ENCODE measurements at regions of chr18 and their contacts with region 1.

Region 1: DNA sequence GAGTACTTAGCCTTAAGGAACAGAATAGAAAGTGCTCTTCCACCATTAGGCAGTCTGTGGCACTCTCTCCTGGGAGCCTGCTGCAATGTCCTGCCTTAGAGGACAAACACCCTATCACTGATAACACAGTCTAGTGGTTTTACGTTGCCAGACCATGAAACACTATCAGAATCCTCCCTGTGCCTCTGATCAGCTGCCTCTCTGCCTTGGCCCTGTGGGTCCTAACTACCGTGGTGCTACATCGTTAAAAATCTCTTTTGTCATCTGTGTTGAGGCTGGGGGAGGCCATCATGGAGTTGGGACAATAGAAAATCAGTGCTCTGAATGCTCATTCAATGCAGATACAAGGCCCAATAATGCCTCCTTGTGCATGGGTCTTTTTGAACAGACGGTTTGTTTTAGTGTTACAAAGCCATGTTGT is 11.9 kb upstream of the APCDD1 start:
- DNase-seq: no peak
- ATAC-seq: peak; percentile 65 to 85 (median 82)
- H3K4me3 ChIP-seq: no peak overlapping the region
- H3K27ac ChIP-seq: no peak overlapping the region
- H3K4me1 ChIP-seq: no peaks in the 10 kb centered on the region
- H3K27me3 ChIP-seq: no peaks in the 10 kb centered on the region
- CTCF ChIP-seq: peak in 8 of 12 donors; percentile 15 to 36 (median 22)
- POLR2A ChIP-seq: no peak

Region 2: DNA sequence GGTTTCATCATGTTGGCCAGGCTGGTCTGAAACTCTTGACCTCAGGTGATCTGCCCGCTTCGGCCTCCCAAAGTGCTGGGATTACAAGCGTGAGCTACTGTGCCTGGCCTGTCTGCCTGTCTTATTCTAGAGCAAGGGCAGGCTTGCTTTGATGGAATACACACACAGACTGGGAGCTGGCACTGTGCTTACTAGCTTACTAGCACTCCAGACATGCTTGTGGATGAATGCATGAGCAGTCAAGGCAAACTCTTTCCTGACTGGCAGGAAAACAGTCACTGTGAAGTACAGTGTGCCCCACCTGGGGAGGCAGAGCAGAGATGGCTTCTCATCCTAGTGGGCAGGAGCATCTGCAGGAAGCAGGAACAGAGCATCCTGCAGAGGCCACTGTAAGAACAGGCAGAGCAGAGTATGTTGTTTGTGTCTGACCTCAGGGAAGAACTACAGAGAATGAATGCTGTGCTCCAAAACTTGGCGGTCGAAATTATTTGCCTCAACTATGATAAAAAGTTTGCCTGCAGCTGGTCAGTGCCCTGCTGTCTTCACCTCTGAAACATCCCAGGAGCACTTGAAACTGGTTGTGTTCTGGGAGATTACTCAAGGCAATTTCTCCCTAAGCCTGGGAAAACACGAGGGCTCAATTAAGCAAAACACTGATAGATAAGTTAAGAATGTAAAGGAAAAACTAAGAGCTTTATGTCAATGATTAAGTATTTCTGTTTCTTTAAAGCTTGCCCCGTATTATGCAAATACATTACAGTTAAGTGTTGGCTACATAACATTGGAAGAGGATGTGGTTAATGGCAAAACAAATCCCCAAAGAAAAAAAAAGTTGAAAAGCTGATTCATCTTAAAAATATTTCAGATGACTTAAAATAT is 426.4 kb before region 1 on chr18:
- intact Hi-C with region 1: loop called in 1 of 10 experiments (anchors 10 kb)
- DNase-seq: peak in 4 of 5 donors; percentile 34 to 60 (median 38)
- ATAC-seq: peak; percentile 76 to 89 (median 83)
- H3K4me3 ChIP-seq: no peak overlapping the region
- H3K27ac ChIP-seq: peak overlapping the region; percentile 49 to 86 (median 66)
- H3K4me1 ChIP-seq: peaks cover 0 to 50% (median 31%) of the 10 kb centered on the region in 12 donors
- H3K27me3 ChIP-seq: no peaks in the 10 kb centered on the region
- CTCF ChIP-seq: peak in 9 of 12 donors; percentile 24 to 64 (median 45)
- POLR2A ChIP-seq: no peak

Region 3: DNA sequence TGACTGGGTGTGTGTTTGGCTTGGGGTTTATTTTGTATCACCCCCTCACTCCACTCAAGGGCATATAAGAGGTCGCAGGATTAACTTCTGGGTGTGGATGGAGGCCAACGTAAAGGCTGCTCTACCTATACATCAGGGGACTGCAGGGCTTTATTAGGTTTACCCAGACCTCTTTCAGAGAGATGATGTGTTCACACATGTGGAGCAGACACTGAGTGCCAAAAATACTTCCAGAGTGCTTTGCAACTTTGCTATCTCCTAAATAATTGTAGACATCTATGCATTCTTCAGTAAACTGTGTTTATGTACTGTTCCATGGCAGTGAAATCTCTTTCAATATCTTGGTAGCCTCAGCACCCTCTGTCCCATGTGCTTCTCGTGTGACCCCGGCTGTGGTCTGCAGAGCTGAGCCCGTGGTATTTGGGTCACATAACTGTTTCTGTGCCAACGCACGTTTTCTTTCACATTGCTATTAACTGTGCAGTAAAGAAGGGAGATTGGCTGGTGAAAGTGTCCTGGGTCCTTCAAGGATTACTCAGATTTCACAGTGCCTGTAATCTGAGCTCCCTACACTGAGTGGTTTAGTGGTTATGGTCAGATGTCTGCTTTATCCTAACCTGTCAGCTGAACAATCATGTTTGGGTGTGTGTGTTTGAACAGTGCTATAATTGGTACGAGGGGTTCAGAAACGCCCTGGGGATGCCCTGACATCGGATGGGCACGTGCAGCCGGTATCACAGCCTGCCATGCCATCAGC is 320.6 kb before region 1 on chr18:
- intact Hi-C with region 1: loop called in 1 of 10 experiments (anchors 10 kb)
- DNase-seq: no peak
- ATAC-seq: peak; percentile 69 to 88 (median 74)
- H3K4me3 ChIP-seq: no peak overlapping the region
- H3K27ac ChIP-seq: peak overlapping the region in 10 of 12 donors; percentile 3 to 79 (median 56)
- H3K4me1 ChIP-seq: peaks cover 0 to 23% (median 13%) of the 10 kb centered on the region in 12 donors
- H3K27me3 ChIP-seq: no peaks in the 10 kb centered on the region
- CTCF ChIP-seq: no peak
- POLR2A ChIP-seq: no peak

Region 4: DNA sequence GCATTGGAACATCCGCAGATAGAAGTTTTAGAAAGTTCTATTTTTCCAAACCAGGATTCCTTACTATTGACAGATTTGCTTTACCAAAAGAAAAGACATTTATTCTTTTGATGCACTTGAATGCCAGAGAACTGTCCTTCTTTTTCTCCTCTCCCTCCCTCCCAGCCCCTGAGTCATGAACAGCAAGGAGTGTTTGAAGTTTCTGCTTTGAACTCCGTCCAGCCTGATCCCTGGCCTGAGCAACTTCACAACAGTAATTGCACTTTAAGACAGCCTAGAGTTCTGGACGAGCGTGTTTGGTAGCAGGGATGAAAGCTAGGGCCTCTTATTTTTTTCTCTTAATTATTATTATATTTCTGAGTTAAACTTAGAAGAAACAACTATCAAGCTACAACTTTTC is 45.5 kb after region 1 on chr18:
- intact Hi-C with region 1: loop called in 1 of 10 experiments (anchors 5 kb)
- DNase-seq: no peak
- ATAC-seq: no peak
- H3K4me3 ChIP-seq: no peak overlapping the region
- H3K27ac ChIP-seq: no peak overlapping the region
- H3K4me1 ChIP-seq: peaks cover 0 to 11% (median 0%) of the 10 kb centered on the region in 12 donors
- H3K27me3 ChIP-seq: no peaks in the 10 kb centered on the region
- CTCF ChIP-seq: no peak
- POLR2A ChIP-seq: no peak

Region 5: GRCh38 chr18:10560450-10561045 is 118.0 kb after region 1 on chr18:
- intact Hi-C with region 1: no loop called
- DNase-seq: peak in 4 of 5 donors; percentile 57 to 71 (median 70)
- ATAC-seq: peak; percentile 66 to 74 (median 72)
- H3K4me3 ChIP-seq: peak overlapping the region in 8 of 12 donors; percentile 27 to 51 (median 33)
- H3K27ac ChIP-seq: peak overlapping the region in 3 of 12 donors; percentile 6 to 57 (median 19)
- H3K4me1 ChIP-seq: peaks cover 0 to 20% (median 7%) of the 10 kb centered on the region in 12 donors
- H3K27me3 ChIP-seq: no peaks in the 10 kb centered on the region
- CTCF ChIP-seq: peak; percentile 68 to 82 (median 76)
- POLR2A ChIP-seq: no peak